Activated CD4-positive, alpha-beta memory T cell treated with anti-CD3 and anti-CD28 coated beads, Interleukin-2, amount 10 ng/mL, durations not matched to agents 7 days and 5 days (primary cell): ENCODE measurements at regions of chr5 and their contacts with region 1.

Region 1: GRCh38 chr5:128674825-128675446 is 136.9 kb upstream of the FBN2 start:
- DNase-seq: peak; percentile 32
- H3K4me3 Mint-ChIP-seq: no peak overlapping the region
- H3K27ac Mint-ChIP-seq: no peak overlapping the region
- H3K4me1 Mint-ChIP-seq: no peaks in the 10 kb centered on the region
- H3K27me3 Mint-ChIP-seq: no peaks in the 10 kb centered on the region

Region 2: DNA sequence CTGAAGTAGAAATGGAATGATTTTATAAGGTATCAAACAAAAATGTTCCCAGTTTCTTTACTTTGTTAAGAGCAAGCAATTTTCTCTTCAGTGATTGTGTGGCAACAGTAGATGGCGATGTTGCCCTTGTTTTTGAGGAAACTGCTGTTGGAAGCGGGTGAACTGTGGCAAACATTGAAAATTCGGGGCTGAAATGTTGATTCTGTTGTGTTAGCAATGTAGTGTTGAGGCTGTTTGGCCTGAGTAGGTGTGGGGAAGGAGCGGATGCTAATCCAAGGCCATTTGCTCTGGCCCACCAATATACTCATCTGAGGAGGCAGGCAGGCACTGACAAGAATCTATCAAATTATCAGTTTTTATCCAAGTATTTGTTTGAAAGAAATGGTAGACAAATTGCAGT is 461.6 kb before region 1 on chr5:
- CTCF ChIA-PET with region 1: interaction called, 13 read pairs
- POLR2A ChIA-PET with region 1: no interaction called
- DNase-seq: peak; percentile 48
- H3K4me3 Mint-ChIP-seq: no peak overlapping the region
- H3K27ac Mint-ChIP-seq: no peak overlapping the region
- H3K4me1 Mint-ChIP-seq: no peaks in the 10 kb centered on the region
- H3K27me3 Mint-ChIP-seq: peaks cover 2% of the 10 kb centered on the region

Region 3: GRCh38 chr5:129244478-129244877 is 569.5 kb after region 1 on chr5:
- CTCF ChIA-PET with region 1: no interaction called
- POLR2A ChIA-PET with region 1: no interaction called
- DNase-seq: no peak
- H3K4me3 Mint-ChIP-seq: no peak overlapping the region
- H3K27ac Mint-ChIP-seq: no peak overlapping the region
- H3K4me1 Mint-ChIP-seq: no peaks in the 10 kb centered on the region
- H3K27me3 Mint-ChIP-seq: no peaks in the 10 kb centered on the region